ENCODE measurements at regions of chr6 and their contacts with region 1.

Region 1: GRCh38 chr6:105484238-105485161 is 81.6 kb upstream of the PREP start:
- DNase-seq: no peak
- H3K4me3 ChIP-seq: no peak overlapping the region
- H3K27ac ChIP-seq: no peak overlapping the region
- H3K4me1 ChIP-seq: peaks cover 15 to 30% of the 10 kb centered on the region in 2 donors
- H3K27me3 ChIP-seq: no peaks in the 10 kb centered on the region
- CTCF ChIP-seq: peak; percentile 76 to 95 (median 92)
- POLR2A ChIP-seq: no peak

Region 2: DNA sequence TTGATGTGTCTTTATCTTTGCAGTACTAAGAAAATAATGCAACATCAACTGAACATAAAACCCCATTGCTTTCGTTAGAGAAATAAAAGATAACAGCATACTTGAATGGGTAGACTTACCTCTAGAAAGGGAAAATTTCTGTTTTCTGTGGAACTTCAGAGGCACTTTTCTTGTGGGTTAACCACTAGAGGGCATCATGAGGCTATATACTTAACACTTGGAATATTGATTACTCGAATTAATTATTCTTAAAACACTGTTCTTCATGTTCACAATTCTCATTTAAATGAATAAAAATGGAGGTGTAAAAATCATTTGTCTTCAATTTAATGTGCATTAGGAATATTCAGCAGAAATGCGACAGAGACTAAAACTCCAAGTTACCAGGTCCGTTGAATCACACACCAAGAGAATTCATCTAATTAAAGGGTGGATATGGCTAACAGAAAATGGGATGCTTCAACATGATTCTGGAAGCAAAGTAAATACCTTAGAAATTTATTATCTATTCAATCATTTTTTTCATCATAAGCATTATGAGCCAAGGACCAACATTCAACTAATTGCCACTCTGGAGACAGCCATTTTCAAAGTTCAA is 249.2 kb after region 1 on chr6:
- intact Hi-C with region 1: loop called in 1 of 2 experiments (anchors 5 kb)
- DNase-seq: no peak
- H3K4me3 ChIP-seq: no peak overlapping the region
- H3K27ac ChIP-seq: no peak overlapping the region
- H3K4me1 ChIP-seq: no peaks in the 10 kb centered on the region
- H3K27me3 ChIP-seq: no peaks in the 10 kb centered on the region
- CTCF ChIP-seq: peak; percentile 49 to 76 (median 64)
- POLR2A ChIP-seq: no peak

Region 3: GRCh38 chr6:106085984-106086813 is 601.7 kb after region 1 on chr6 and contains the start of gene PRDM1:
- intact Hi-C with region 1: no loop called
- DNase-seq: peak; percentile 64 to 82 (median 69)
- H3K4me3 ChIP-seq: peak within 1 kb of the TSS in 2 of 4 donors; percentile 18 to 54
- H3K27ac ChIP-seq: peak within 1 kb of the TSS in 3 of 5 donors; percentile 24 to 79 (median 70)
- H3K4me1 ChIP-seq: peaks cover 10 to 17% of the 10 kb centered on the region in 2 donors
- H3K27me3 ChIP-seq: peaks cover 51% of the 10 kb centered on the region
- CTCF ChIP-seq: peak in 2 of 6 experiments; percentile 15 to 28
- POLR2A ChIP-seq: peak; percentile 30 to 35
- total RNA-seq, gene PRDM1: 0.55 to 7.5 (median 3.7) TPM

Region 4: GRCh38 chr6:106300944-106301343 is 816.4 kb after region 1 on chr6:
- intact Hi-C with region 1: loop called in 1 of 2 experiments (anchors 10 kb)
- DNase-seq: no peak
- H3K4me3 ChIP-seq: no peak overlapping the region
- H3K27ac ChIP-seq: no peak overlapping the region
- H3K4me1 ChIP-seq: peaks cover 9 to 24% of the 10 kb centered on the region in 2 donors
- H3K27me3 ChIP-seq: no peaks in the 10 kb centered on the region
- CTCF ChIP-seq: peak in 5 of 6 experiments; percentile 38 to 60 (median 54)
- POLR2A ChIP-seq: no peak

Measured in adrenal gland (tissue), 19 donors.